ENCODE measurements at regions of chr3 and their contacts with region 1.

Region 1: DNA sequence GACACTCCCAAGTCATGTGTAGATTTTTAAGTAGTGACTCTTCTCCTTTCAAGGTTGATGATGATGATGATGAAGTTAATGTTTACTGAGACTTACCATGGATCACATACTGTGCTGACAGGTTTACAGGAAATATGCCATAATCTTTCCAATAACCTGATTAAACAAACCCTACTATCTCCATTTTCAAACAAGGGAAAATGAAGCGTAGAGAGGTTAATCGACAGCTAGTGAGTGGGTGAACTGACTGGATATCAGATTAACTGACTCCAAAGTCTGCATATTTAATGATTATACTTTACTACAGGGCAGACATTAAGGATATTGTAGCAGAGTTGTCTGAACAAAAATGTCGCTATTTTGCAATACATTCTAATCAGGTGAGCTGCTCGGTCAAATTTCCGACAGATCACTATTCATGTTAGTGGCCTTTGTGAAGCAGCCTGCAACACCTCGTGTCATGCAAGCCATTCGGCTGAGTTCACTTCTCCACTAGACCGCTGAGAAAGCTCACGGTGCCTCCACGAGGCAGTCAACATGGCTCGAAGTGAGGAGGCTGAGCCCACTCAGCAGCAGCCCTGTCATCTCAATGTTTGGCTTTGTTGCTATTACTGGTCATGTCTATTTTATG is 264.2 kb downstream of the NFKBIZ start:
- DNase-seq: peak; percentile 24
- H3K4me3 Mint-ChIP-seq: no peak overlapping the region
- H3K27ac Mint-ChIP-seq: peak overlapping the region; percentile 81
- H3K4me1 Mint-ChIP-seq: peaks cover 30% of the 10 kb centered on the region
- H3K27me3 Mint-ChIP-seq: no peaks in the 10 kb centered on the region

Region 2: GRCh38 chr3:102053375-102053989 is 60.0 kb before region 1 on chr3:
- CTCF ChIA-PET with region 1: no interaction called
- intact Hi-C with region 1: loop called (anchors 1 kb)
- DNase-seq: peak; percentile 56
- H3K4me3 Mint-ChIP-seq: no peak overlapping the region
- H3K27ac Mint-ChIP-seq: no peak overlapping the region
- H3K4me1 Mint-ChIP-seq: peaks cover 33% of the 10 kb centered on the region
- H3K27me3 Mint-ChIP-seq: no peaks in the 10 kb centered on the region

Region 3: DNA sequence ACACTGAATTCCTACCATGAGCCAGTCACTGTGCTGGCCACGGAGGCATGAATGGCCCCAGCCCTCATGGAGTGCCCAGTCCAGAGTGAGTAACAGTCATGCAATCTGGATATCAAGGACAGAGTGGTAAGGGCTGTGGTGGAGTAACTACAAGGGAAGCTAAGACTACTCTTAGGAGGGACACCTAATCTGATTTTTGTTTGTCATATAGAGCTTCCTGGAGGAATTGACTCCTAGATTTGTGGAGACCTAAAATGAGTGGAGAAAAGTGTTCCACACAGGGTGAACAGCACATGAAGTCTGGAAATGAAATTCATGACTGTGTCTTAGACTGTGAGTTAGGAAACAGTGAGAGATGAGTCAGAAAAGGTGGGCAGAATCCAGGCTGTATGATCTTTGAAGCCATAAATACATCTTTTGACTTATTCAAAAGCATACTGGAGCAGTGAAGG is 44.3 kb before region 1 on chr3:
- CTCF ChIA-PET with region 1: no interaction called
- intact Hi-C with region 1: loop called (anchors 1 kb)
- DNase-seq: peak; percentile 12
- H3K4me3 Mint-ChIP-seq: no peak overlapping the region
- H3K27ac Mint-ChIP-seq: no peak overlapping the region
- H3K4me1 Mint-ChIP-seq: peaks cover 25% of the 10 kb centered on the region
- H3K27me3 Mint-ChIP-seq: no peaks in the 10 kb centered on the region

Region 4: DNA sequence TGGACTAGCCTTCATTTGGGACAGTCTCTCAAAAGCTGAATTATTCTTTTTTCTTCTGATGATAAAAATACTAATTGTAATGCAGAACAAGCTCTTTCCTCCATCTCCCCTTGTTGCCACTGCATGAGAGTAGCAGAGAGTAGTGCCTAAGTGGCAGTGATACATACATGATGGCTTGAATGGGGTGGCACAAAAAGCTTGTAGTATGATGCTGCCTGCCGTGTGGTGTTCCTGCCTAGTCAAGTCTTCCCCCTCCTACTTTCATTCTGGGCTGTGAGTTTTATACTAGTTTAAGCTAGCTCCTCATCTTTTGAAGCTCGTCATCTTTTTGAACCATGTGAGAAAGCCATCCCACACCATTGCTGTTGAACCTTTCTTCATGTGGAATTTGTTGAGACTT is 33.7 kb before region 1 on chr3:
- CTCF ChIA-PET with region 1: no interaction called
- intact Hi-C with region 1: loop called (anchors 1 kb)
- DNase-seq: peak; percentile 59
- H3K4me3 Mint-ChIP-seq: peak overlapping the region; percentile 23
- H3K27ac Mint-ChIP-seq: no peak overlapping the region
- H3K4me1 Mint-ChIP-seq: peaks cover 55% of the 10 kb centered on the region
- H3K27me3 Mint-ChIP-seq: no peaks in the 10 kb centered on the region

Region 5: GRCh38 chr3:102163036-102163827 is 49.7 kb after region 1 on chr3:
- CTCF ChIA-PET with region 1: no interaction called
- intact Hi-C with region 1: loop called (anchors 5 kb)
- DNase-seq: peak; percentile 31
- H3K4me3 Mint-ChIP-seq: no peak overlapping the region
- H3K27ac Mint-ChIP-seq: peak overlapping the region; percentile 6
- H3K4me1 Mint-ChIP-seq: peaks cover 25% of the 10 kb centered on the region
- H3K27me3 Mint-ChIP-seq: no peaks in the 10 kb centered on the region

Region 6: DNA sequence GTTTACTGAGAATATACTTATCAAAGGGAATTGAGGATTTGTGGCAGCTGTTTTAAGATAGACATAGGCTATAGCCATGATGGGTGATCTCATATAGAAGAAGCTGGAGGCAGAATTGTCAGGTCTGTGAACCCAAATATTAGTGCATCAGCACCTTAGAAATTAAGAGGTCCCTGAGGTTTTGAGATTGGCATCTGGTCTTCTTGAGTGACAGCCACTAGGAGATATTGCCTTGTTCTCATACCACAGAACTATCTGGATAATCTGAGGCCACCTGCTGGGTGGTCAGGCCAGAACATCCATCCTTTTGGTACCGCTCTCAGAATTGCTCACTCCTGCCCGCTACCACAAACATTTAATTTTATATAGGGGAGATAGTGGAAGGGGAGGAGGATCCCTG is 110.6 kb after region 1 on chr3:
- CTCF ChIA-PET with region 1: interaction called, 3 read pairs
- intact Hi-C with region 1: loop called (anchors 5 kb)
- DNase-seq: peak; percentile 50
- H3K4me3 Mint-ChIP-seq: no peak overlapping the region
- H3K27ac Mint-ChIP-seq: no peak overlapping the region
- H3K4me1 Mint-ChIP-seq: peaks cover 35% of the 10 kb centered on the region
- H3K27me3 Mint-ChIP-seq: no peaks in the 10 kb centered on the region